ENCODE measurements at regions of chr9 and their contacts with region 1.

Region 1: DNA sequence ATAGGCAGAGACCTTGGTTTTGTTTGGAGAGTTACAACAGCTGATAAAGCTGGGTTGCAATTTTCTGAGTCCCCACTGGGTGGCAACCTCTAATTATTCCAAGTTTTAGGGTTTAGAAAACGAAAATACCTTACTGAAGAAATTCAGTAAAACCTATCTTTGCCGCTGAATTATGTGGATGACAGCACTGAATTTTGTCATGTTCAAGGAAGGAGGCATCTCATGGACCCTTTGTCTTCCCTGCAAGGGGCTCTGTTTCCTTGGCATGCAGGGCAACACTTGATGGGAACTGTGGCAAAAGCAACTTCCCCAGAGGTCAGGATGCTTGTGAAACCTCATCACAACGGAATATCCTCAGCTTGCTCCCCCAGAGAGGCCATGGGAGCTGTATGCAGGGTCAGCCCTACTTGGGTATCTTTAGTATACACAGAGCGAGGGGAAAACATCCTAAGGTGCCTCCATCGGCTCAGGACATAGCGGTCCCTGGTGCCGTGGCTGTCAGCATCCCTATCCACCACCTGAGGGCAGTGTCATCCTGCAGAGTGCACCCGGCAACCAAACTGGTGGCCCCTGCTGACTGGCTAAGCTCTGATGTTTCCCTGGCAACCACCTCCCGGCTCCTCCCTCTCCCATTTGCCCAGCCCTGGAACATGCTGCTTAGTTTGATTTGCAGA is 123.1 kb downstream of the RXRA start:
- DNase-seq: peak; percentile 34
- ATAC-seq: peak; percentile 100
- H3K4me3 ChIP-seq: no peak overlapping the region
- H3K27ac ChIP-seq: no peak overlapping the region
- H3K4me1 ChIP-seq: no peaks in the 10 kb centered on the region; the same call in 1 of the 2 replicates
- H3K27me3 ChIP-seq: no peaks in the 10 kb centered on the region; a peak in 1 of 4 replicates
- CTCF ChIP-seq: peak; percentile 77 to 94 (median 78)
- EP300 ChIP-seq: no peak
- POLR2A ChIP-seq: no peak
- RAD21 ChIP-seq: peak; percentile 75

Region 2: GRCh38 chr9:133845440-133845839 is 603.9 kb before region 1 on chr9:
- CTCF ChIA-PET with region 1: no interaction called
- POLR2A ChIA-PET with region 1: no interaction called
- RAD21 ChIA-PET with region 1: no interaction called
- SMC1A ChIA-PET with region 1: no interaction called
- in situ Hi-C with region 1: no loop called
- intact Hi-C with region 1: no loop called
- DNase-seq: no peak
- ATAC-seq: no peak
- H3K4me3 ChIP-seq: no peak overlapping the region
- H3K27ac ChIP-seq: no peak overlapping the region
- H3K4me1 ChIP-seq: no peaks in the 10 kb centered on the region
- H3K27me3 ChIP-seq: no peaks in the 10 kb centered on the region
- CTCF ChIP-seq: no peak
- EP300 ChIP-seq: no peak
- POLR2A ChIP-seq: no peak; the same call in 1 of the 2 replicates
- RAD21 ChIP-seq: no peak

Region 3: GRCh38 chr9:134276453-134277245 is 172.7 kb before region 1 on chr9:
- CTCF ChIA-PET with region 1: no interaction called
- POLR2A ChIA-PET with region 1: no interaction called
- RAD21 ChIA-PET with region 1: no interaction called
- SMC1A ChIA-PET with region 1: no interaction called
- in situ Hi-C with region 1: no loop called
- intact Hi-C with region 1: no loop called
- DNase-seq: no peak
- ATAC-seq: no peak
- H3K4me3 ChIP-seq: no peak overlapping the region
- H3K27ac ChIP-seq: no peak overlapping the region
- H3K4me1 ChIP-seq: no peaks in the 10 kb centered on the region
- H3K27me3 ChIP-seq: peaks cover 0 to 4% of the 10 kb centered on the region in 2 experiments; a peak in 1 of 4 replicates
- CTCF ChIP-seq: no peak
- EP300 ChIP-seq: no peak
- POLR2A ChIP-seq: no peak
- RAD21 ChIP-seq: no peak

Region 4: GRCh38 chr9:134356570-134357504 is 92.5 kb before region 1 on chr9:
- CTCF ChIA-PET with region 1: no interaction called
- POLR2A ChIA-PET with region 1: no interaction called
- RAD21 ChIA-PET with region 1: no interaction called
- SMC1A ChIA-PET with region 1: no interaction called
- in situ Hi-C with region 1: no loop called
- intact Hi-C with region 1: no loop called
- DNase-seq: no peak
- ATAC-seq: no peak
- H3K4me3 ChIP-seq: no peak overlapping the region
- H3K27ac ChIP-seq: no peak overlapping the region
- H3K4me1 ChIP-seq: no peaks in the 10 kb centered on the region
- H3K27me3 ChIP-seq: no peaks in the 10 kb centered on the region; a peak in 1 of 4 replicates
- CTCF ChIP-seq: no peak
- EP300 ChIP-seq: no peak
- POLR2A ChIP-seq: no peak
- RAD21 ChIP-seq: no peak

Region 5: DNA sequence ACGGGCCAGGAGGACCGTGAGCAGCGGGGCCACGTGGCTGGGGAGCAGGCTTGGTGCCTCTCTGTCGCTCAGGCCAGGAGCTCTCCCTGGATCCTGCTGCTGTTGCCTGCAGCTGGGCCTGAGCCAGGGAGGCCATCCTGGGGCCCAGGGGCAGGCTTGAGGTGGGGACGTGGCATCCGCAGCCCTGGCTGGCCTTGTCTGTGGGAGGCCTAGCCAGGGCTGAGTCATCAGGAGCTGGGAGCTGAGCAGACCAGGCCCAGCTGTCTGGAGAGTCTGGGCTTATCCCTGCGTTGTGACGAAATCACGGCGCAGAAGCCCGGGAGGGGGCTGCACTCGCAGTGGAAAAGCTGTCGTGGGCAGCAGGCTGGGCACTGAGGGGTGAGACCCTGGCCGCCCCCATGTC is 53.5 kb after region 1 on chr9:
- CTCF ChIA-PET with region 1: no interaction called
- POLR2A ChIA-PET with region 1: no interaction called
- RAD21 ChIA-PET with region 1: no interaction called
- SMC1A ChIA-PET with region 1: no interaction called
- in situ Hi-C with region 1: no loop called
- intact Hi-C with region 1: no loop called
- DNase-seq: no peak
- ATAC-seq: no peak
- H3K4me3 ChIP-seq: no peak overlapping the region
- H3K27ac ChIP-seq: no peak overlapping the region
- H3K4me1 ChIP-seq: no peaks in the 10 kb centered on the region
- H3K27me3 ChIP-seq: no peaks in the 10 kb centered on the region; a peak in 3 of 4 replicates
- CTCF ChIP-seq: no peak
- EP300 ChIP-seq: no peak
- POLR2A ChIP-seq: no peak
- RAD21 ChIP-seq: no peak

Region 6: DNA sequence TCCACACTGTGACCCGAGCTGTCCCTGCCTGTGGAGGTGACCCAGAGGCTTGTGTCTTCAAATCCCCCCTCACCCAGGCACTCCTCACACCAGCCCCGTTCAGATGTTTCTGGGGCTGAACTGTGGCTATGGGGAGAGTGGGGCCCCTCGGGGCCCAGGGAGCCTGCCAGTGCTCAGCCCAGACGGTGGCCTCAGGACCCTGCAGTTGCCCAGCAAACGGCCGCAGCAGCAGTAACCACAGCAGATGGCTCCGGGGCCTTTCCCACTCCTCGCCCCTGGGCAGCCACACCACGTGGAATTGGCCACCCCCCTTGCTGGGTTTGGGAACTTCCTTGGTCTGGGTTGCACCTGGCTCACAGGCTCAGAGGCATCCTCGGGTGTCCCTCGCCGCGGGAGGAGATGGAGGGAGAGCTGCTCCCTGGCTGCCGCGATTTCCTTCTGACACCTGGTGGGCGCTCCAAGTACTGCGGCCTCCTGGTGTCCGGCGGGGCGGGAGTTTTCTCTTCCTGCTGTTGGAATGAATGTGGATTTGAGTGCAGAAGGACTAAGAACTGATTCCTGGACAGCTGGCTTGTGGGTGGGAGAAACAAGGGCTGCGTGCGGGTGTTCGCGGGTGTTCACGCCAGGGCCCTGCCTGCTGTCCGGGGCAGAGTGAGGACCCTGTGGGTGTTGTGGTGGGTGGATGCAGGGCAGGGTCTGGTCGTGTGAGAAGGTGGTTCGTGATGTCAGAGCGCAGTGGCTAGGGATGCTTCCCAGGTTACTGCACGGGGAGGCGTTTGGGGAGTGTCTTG is 289.7 kb after region 1 on chr9:
- CTCF ChIA-PET with region 1: interaction called, 3 read pairs
- POLR2A ChIA-PET with region 1: no interaction called
- RAD21 ChIA-PET with region 1: no interaction called
- SMC1A ChIA-PET with region 1: no interaction called
- in situ Hi-C with region 1: no loop called
- intact Hi-C with region 1: loop called (anchors 5 kb)
- DNase-seq: no peak
- ATAC-seq: no peak
- H3K4me3 ChIP-seq: no peak overlapping the region
- H3K27ac ChIP-seq: no peak overlapping the region
- H3K4me1 ChIP-seq: no peaks in the 10 kb centered on the region
- H3K27me3 ChIP-seq: no peaks in the 10 kb centered on the region
- CTCF ChIP-seq: peak; percentile 32 to 54 (median 49)
- EP300 ChIP-seq: no peak
- POLR2A ChIP-seq: no peak
- RAD21 ChIP-seq: peak; percentile 35